CD4-positive, alpha-beta memory T cell (primary cell): ENCODE measurements at regions of chr1 and their contacts with region 1.

Region 1: DNA sequence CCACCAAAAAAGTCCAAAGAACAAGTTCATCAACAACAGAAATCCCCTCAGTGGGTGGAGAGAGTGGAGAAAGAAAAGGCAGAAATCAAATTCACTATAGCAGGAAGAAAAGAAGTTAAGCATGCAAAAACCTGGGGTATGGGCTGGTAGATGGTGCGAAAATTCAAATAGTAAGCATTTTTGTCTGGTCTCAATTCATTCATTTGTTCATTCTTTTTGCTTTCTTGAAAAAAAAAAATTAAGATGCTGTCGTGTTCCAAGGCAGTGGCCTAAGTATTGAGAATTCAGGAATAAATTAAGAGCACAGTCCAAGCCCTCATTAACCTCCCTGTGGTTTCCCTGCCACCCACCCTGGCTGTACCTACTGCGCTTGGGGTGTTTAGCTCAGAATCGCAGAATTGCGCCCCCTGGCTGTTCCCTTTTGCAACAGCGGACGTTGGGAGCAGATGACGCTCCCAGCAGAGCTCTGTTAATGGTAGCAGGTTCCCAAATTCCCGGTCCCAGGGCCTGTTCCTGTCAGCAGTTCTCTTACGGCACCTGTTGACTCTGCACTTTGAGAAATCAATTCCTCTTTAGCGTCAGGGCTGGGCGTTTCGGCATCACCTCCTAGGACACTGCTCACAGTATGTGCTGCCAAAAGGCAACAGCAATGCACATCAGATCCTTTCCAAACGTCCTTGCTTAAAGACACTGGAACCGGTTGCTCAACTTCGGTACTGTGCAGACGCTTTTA is 34.0 kb upstream of the SSX2IP start:
- DNase-seq: peak; percentile 22 to 46 (median 40)
- H3K4me3 ChIP-seq: no peak overlapping the region
- H3K4me3 Mint-ChIP-seq: no peak overlapping the region
- H3K27ac ChIP-seq: no peak overlapping the region
- H3K27ac Mint-ChIP-seq: peak overlapping the region in 1 of 7 donors; percentile 54
- H3K4me1 ChIP-seq: no peaks in the 10 kb centered on the region
- H3K4me1 Mint-ChIP-seq: peaks cover 0 to 1% (median 0%) of the 10 kb centered on the region in 4 donors
- H3K27me3 ChIP-seq: no peaks in the 10 kb centered on the region
- H3K27me3 Mint-ChIP-seq: peaks cover 0 to 5% of the 10 kb centered on the region in 2 donors

Region 2: DNA sequence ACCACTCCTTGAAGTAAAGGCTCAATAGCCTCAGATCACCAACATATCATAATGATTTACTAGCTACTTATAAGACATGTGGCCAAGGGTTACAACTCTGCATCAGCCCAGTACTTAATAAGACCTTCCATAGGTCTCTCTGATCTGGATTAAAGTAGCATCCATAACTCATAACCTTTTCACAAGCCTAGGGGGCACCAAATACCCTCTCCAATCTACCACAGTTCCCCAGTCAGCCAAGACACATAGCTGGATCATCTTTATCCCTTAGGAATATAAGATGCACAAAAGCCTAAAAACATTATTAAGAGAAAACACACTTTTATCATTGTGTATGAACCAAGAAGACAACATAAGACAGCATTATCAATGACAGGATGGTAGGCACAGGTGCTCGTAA is 56.1 kb before region 1 on chr1:
- CTCF ChIA-PET with region 1: interaction called, 28 read pairs
- POLR2A ChIA-PET with region 1: no interaction called
- intact Hi-C with region 1: loop called (anchors 1 kb)
- DNase-seq: no peak
- H3K4me3 ChIP-seq: no peak overlapping the region
- H3K4me3 Mint-ChIP-seq: no peak overlapping the region
- H3K27ac ChIP-seq: no peak overlapping the region
- H3K27ac Mint-ChIP-seq: no peak overlapping the region
- H3K4me1 ChIP-seq: no peaks in the 10 kb centered on the region
- H3K4me1 Mint-ChIP-seq: peaks cover 3 to 6% (median 5%) of the 10 kb centered on the region in 4 donors
- H3K27me3 ChIP-seq: no peaks in the 10 kb centered on the region
- H3K27me3 Mint-ChIP-seq: no peaks in the 10 kb centered on the region

Region 3: DNA sequence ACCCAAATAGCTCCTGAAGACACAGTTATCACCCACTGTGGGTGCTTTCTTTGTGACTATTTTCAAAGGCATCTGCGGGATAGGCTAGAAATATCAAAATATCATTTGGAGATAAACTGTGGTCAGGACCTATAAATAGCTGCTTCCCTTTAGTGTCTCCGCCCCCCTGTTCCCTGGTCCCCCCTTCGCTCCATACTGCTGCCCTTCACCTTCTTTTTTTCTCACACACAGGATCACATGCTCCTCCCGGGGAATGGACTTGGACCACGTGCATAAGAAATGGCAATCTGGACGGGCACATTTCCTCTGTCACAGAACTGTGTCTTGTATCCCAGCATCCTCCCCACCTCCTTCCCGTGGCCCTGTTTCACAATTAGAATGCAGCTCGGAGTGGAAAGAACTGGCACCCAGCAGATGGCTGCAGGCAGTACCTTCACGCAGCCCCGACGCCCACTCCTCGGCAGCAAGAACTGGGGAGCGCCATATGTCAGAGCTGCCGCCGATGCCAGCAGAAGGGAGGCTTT is 34.7 kb after region 1 on chr1:
- CTCF ChIA-PET with region 1: interaction called, 10 read pairs
- POLR2A ChIA-PET with region 1: no interaction called
- intact Hi-C with region 1: no loop called
- DNase-seq: no peak
- H3K4me3 ChIP-seq: no peak overlapping the region
- H3K4me3 Mint-ChIP-seq: peak overlapping the region in 5 of 8 donors; percentile 25 to 81 (median 55)
- H3K27ac ChIP-seq: no peak overlapping the region
- H3K27ac Mint-ChIP-seq: no peak overlapping the region
- H3K4me1 ChIP-seq: no peaks in the 10 kb centered on the region
- H3K4me1 Mint-ChIP-seq: peaks cover 2 to 12% (median 5%) of the 10 kb centered on the region in 4 donors
- H3K27me3 ChIP-seq: no peaks in the 10 kb centered on the region
- H3K27me3 Mint-ChIP-seq: peaks cover 6 to 9% of the 10 kb centered on the region in 2 donors